Ovary (tissue), 10 donors: ENCODE measurements at regions of chr15 and their contacts with region 1.

Region 1: DNA sequence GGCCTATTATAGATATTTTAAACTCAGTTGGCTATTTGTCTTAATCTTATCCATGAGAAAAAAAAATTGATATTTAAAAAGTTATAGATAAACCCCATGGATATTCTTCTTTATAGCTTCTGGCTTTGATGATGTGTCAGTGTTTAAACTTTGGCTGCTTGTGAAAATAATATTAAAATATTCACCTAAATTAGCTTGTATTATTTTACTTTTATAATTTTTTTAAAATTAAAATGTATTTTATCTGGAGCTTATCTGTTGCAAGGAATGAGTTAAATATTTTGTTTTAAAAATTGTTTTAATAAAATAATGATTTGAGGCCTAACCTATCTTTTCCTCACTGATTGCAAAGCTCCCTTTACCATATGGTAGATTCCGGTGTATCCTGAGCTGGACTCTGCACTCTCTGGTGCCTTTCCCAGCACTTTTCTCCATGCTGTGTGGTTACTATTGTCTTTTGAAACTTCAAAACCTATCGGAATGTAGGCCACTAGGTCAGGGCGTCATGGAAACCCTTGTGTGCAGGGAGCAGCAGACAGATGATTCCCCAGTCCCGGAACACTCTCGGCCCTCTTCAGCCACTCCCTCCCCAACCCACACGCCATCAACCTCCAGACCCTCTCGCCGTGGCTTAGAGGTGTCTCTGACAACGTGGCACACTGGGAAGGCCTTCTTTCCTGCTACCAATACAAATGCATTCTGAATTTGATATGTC is 252.3 kb upstream of the ATP10A start:
- DNase-seq: no peak
- H3K4me3 ChIP-seq: no peak overlapping the region
- H3K27ac ChIP-seq: no peak overlapping the region
- H3K4me1 ChIP-seq: no peaks in the 10 kb centered on the region
- H3K27me3 ChIP-seq: no peaks in the 10 kb centered on the region
- CTCF ChIP-seq: no peak
- EP300 ChIP-seq: no peak
- POLR2A ChIP-seq: no peak

Region 2: GRCh38 chr15:25670025-25670554 is 445.3 kb before region 1 on chr15:
- intact Hi-C with region 1: no loop called
- DNase-seq: peak; percentile 29 to 54 (median 46)
- H3K4me3 ChIP-seq: peak overlapping the region; percentile 10
- H3K27ac ChIP-seq: no peak overlapping the region
- H3K4me1 ChIP-seq: no peaks in the 10 kb centered on the region
- H3K27me3 ChIP-seq: no peaks in the 10 kb centered on the region
- CTCF ChIP-seq: no peak
- EP300 ChIP-seq: no peak
- POLR2A ChIP-seq: no peak

Region 3: DNA sequence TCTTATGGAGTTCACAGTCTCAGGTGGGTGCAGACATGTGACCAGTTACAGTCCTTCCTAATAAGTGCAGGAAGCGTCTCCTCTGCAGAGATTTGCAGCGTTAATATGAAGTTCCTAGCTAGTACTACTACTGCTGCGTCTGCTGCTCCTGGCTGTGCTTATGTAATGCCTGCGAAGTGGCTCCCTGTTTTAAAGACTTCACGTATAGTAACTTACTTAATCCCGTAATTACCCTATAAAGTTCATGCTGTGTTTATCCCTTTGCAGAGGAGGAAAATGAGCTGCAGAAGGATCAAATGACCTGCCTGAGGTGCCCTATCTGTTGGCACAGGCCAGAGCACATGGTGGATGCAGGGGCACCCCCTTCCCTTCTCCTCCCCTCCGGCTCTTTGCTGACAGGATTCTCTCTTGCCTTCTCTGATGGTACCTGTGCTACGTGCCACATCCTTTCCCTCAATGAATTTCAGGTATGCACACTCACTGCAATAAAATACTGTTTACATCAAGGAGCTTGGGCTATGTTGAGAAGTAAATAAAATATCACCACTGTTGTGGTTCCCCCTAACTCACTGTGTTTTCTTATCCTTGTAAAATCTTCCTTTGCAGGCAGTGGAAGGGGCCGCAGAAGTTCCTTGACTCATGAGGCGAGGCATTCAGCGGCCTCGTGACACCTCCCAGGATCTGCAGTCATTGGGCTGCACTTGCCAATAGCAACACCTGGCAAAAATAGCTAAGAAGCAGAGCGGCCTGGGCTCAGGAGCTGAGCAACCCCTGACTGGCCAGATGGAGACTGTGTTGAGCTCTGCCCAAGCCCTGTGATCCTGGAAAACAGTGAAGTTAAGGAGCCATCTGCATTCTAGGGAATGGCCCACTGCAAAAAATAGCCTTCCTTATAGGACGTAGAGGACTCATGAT is 63.4 kb before region 1 on chr15:
- intact Hi-C with region 1: loop called in 1 of 4 experiments (anchors 10 kb)
- DNase-seq: no peak
- H3K4me3 ChIP-seq: no peak overlapping the region
- H3K27ac ChIP-seq: no peak overlapping the region
- H3K4me1 ChIP-seq: no peaks in the 10 kb centered on the region
- H3K27me3 ChIP-seq: no peaks in the 10 kb centered on the region
- CTCF ChIP-seq: no peak
- EP300 ChIP-seq: no peak
- POLR2A ChIP-seq: no peak